Calu3 (cell line): ENCODE measurements at regions of chr1 and their contacts with region 1.

Region 1: GRCh38 chr1:32549616-32550015 is 10.4 kb downstream of the ZBTB8A start:
- DNase-seq: no peak
- H3K4me3 Mint-ChIP-seq: no peak overlapping the region
- H3K27ac Mint-ChIP-seq: no peak overlapping the region
- H3K4me1 Mint-ChIP-seq: no peaks in the 10 kb centered on the region
- H3K27me3 Mint-ChIP-seq: no peaks in the 10 kb centered on the region
- CTCF ChIP-seq: no peak

Region 2: DNA sequence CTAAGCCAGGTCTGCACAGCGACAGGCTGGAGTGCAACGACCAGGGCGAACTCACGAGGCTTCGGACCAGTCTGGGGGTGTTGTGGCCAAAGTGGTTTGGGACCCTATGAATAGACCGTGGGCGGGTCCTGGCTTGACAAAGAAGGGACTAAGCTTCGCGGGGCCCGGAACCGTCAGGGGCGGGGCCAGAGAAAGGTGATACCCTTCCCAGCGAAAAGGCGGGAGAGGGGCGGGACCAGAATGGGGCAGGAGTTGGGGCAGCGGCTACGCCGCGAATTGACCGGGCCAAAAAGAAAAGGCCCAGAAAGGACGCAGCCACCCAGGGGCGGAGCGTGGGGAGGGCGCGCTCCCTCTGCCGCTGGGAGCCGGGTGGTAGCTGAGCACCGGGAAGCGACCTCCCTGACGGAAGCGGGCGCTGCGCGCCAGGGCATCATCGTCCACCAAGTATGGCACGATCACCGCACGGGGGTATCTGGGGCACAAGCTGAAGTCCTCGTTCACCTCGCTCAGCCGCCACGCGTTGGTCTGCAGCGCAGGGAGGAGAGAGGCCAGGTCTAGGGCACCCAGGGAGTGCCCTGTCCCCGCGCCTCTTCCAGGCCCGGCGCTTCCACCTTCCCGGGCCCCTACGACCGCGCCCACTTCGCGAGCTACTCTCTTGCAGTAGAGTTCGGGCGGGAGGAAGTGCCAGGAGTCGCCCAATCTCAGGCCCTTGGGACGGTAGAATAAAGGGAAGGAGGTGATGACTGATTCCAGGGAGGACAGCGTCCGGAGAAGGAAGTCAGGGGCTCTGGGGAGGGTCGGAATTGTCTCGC is 309.3 kb before region 1 on chr1:
- CTCF ChIA-PET with region 1: interaction called, 14 read pairs
- intact Hi-C with region 1: no loop called
- DNase-seq: peak; percentile 77
- H3K4me3 Mint-ChIP-seq: peak overlapping the region; percentile 88
- H3K27ac Mint-ChIP-seq: peak overlapping the region; percentile 64
- H3K4me1 Mint-ChIP-seq: no peaks in the 10 kb centered on the region
- H3K27me3 Mint-ChIP-seq: no peaks in the 10 kb centered on the region
- CTCF ChIP-seq: no peak

Region 3: GRCh38 chr1:32521165-32521564 is 28.5 kb before region 1 on chr1:
- CTCF ChIA-PET with region 1: no interaction called
- intact Hi-C with region 1: no loop called
- DNase-seq: no peak
- H3K4me3 Mint-ChIP-seq: peak overlapping the region; percentile 63
- H3K27ac Mint-ChIP-seq: no peak overlapping the region
- H3K4me1 Mint-ChIP-seq: no peaks in the 10 kb centered on the region
- H3K27me3 Mint-ChIP-seq: no peaks in the 10 kb centered on the region
- CTCF ChIP-seq: no peak

Region 4: GRCh38 chr1:32600034-32600433 is 50.4 kb after region 1 on chr1:
- CTCF ChIA-PET with region 1: no interaction called
- intact Hi-C with region 1: no loop called
- DNase-seq: no peak
- H3K4me3 Mint-ChIP-seq: no peak overlapping the region
- H3K27ac Mint-ChIP-seq: no peak overlapping the region
- H3K4me1 Mint-ChIP-seq: no peaks in the 10 kb centered on the region
- H3K27me3 Mint-ChIP-seq: no peaks in the 10 kb centered on the region
- CTCF ChIP-seq: no peak